ENCODE measurements at regions of chr11 and their contacts with region 1.

Region 1: GRCh38 chr11:61627567-61628445 is 46.9 kb upstream of the SYT7 start:
- DNase-seq: peak; percentile 45
- H3K4me3 ChIP-seq: no peak overlapping the region
- H3K27ac ChIP-seq: no peak overlapping the region
- H3K4me1 ChIP-seq: peaks cover 8% of the 10 kb centered on the region
- H3K27me3 ChIP-seq: no peaks in the 10 kb centered on the region
- CTCF ChIP-seq: peak; percentile 91

Region 2: DNA sequence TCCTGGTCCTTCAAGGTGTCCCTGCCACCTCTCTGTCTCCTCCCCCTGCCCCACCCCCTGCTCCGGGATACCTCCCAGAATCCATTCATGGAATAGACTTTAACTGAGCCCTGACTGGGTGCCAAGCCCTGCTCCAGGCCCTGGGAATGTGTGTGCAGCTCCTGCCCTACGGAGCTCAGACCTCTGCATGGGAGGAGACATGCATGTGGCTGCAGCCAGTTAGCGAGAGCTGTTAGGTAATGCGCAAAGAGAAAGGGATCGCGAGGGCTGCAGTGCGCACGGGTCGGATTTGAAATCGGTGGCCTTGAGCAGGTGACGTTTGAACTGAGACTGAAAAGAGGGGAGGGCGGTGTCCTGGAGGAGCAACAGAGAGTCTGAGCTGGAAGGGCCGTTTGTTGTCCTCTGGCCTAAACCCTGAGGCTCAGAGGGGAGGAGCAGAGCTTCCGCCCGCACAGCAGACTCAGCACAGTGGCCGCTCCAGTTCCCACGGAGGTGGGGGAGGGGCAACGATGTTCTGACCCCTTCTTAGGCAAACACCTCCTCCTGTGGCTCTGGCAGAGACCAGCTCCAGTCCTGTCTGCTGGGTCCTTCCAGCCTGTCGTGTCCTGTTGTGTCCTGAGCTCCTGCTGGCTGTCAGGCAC is 139.0 kb before region 1 on chr11:
- CTCF ChIA-PET with region 1: no interaction called
- POLR2A ChIA-PET with region 1: no interaction called
- intact Hi-C with region 1: no loop called
- DNase-seq: no peak
- H3K4me3 ChIP-seq: no peak overlapping the region
- H3K27ac ChIP-seq: no peak overlapping the region
- H3K4me1 ChIP-seq: peaks cover 7% of the 10 kb centered on the region
- H3K27me3 ChIP-seq: no peaks in the 10 kb centered on the region
- CTCF ChIP-seq: no peak

Region 3: DNA sequence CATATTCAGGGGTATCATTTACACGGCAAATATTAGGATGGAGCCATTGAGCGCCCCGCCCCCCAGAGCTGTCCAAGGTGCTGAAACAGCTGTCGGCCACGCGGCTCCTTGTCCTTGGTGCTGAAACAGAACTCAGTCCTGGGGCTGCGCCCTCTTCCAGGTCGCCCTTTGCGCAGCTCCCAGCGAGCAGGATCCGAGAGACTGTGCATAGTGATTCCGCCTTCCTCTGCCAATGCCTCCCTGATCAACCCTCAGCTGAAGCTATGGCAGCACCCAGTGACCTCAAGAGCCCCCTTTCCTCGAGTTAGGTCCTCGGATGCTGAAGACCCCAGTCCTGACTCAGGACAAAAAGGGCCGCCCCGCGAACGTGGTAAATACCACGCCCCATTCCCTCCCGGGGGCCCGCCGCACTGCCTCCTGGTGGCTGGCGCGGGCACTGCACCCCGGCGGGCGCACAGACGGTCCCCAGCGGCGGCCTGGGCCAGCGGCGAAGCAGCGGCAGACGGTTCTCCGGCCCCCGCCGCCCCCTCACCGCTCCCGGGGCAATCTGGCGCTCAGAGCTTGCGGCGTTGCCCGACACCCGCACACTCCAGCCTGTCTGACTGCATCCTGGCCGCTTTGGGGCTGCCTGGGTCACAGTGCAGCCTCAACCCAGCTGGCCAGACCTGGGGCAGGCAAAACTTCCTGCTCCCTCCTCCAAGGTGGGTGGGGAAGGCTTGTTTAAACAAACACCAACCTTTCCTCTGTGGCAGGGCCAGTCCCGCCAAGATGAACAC is 60.3 kb before region 1 on chr11:
- CTCF ChIA-PET with region 1: interaction called, 6 read pairs
- POLR2A ChIA-PET with region 1: no interaction called
- intact Hi-C with region 1: loop called (anchors 5 kb)
- DNase-seq: peak; percentile 91
- H3K4me3 ChIP-seq: no peak overlapping the region
- H3K27ac ChIP-seq: no peak overlapping the region
- H3K4me1 ChIP-seq: no peaks in the 10 kb centered on the region
- H3K27me3 ChIP-seq: peaks cover 56% of the 10 kb centered on the region
- CTCF ChIP-seq: peak; percentile 72

Region 4: GRCh38 chr11:61581030-61581928 is 46.5 kb before region 1 on chr11 and contains the start of gene SYT7:
- CTCF ChIA-PET with region 1: no interaction called
- POLR2A ChIA-PET with region 1: no interaction called
- intact Hi-C with region 1: loop called (anchors 5 kb)
- DNase-seq: peak; percentile 98
- H3K4me3 ChIP-seq: peak within 1 kb of the TSS; percentile 46
- H3K27ac ChIP-seq: no peak within 1 kb of the TSS
- H3K4me1 ChIP-seq: peaks cover 6% of the 10 kb centered on the region
- H3K27me3 ChIP-seq: peaks cover 24% of the 10 kb centered on the region
- CTCF ChIP-seq: peak; percentile 22; the same call in 1 of the 2 replicates
- total RNA-seq, gene SYT7: 1.3 and 2.0 TPM in 2 replicates

Region 5: GRCh38 chr11:62104816-62105653 is 477.2 kb after region 1 on chr11:
- CTCF ChIA-PET with region 1: no interaction called
- POLR2A ChIA-PET with region 1: no interaction called
- intact Hi-C with region 1: no loop called
- DNase-seq: no peak
- H3K4me3 ChIP-seq: no peak overlapping the region
- H3K27ac ChIP-seq: no peak overlapping the region
- H3K4me1 ChIP-seq: no peaks in the 10 kb centered on the region
- H3K27me3 ChIP-seq: no peaks in the 10 kb centered on the region
- CTCF ChIP-seq: no peak